ENCODE measurements at regions of chr2 and their contacts with region 1.

Region 1: GRCh38 chr2:105761931-105762515 is 17.3 kb downstream of the NCK2 start:
- DNase-seq: no peak
- H3K4me3 Mint-ChIP-seq: peak overlapping the region; percentile 49
- H3K27ac Mint-ChIP-seq: peak overlapping the region; percentile 60
- H3K4me1 Mint-ChIP-seq: peaks cover 90% of the 10 kb centered on the region
- H3K27me3 Mint-ChIP-seq: no peaks in the 10 kb centered on the region

Region 2: GRCh38 chr2:105545730-105546627 is 216.0 kb before region 1 on chr2:
- CTCF ChIA-PET with region 1: no interaction called
- POLR2A ChIA-PET with region 1: no interaction called
- DNase-seq: peak; percentile 70
- H3K4me3 Mint-ChIP-seq: no peak overlapping the region
- H3K27ac Mint-ChIP-seq: no peak overlapping the region
- H3K4me1 Mint-ChIP-seq: peaks cover 15% of the 10 kb centered on the region
- H3K27me3 Mint-ChIP-seq: peaks cover 12% of the 10 kb centered on the region

Region 3: DNA sequence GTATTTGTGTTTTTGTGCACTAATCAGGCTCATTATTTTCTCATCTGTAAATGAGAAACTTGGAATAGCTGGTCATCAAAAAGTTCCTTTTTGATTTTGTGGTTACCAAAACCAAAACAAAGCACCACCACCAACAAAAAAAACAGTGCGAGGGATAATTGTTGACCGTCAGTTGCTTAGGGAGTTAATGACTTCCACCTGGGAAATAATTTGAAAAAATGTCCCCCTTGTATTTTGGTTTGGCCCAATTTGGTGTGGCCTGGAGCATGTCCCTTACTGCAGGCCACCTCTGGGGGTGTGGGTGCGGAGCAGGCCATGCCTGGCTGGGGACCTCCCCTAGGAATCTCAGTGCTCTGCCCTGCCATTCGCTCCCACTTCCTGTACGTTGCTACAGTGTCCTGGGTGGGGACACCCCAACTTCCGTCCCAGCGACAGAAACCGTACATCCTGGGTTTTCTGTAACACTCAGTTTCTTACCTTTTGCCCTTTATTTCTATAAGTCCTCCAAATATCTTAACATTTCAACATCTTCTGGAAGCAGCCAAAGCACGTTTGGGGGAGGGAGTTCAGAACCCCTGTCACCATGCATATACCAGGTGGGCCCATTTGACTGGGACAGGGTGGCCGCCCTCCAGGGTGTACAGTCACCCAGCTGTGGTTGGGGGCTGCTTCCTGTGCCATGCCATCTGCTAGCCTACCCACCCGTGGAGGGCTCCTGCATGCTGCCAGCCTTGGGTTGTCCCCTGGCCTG is 14.0 kb after region 1 on chr2:
- CTCF ChIA-PET with region 1: no interaction called
- POLR2A ChIA-PET with region 1: interaction called, 35 read pairs
- DNase-seq: peak; percentile 50
- H3K4me3 Mint-ChIP-seq: peak overlapping the region; percentile 69
- H3K27ac Mint-ChIP-seq: peak overlapping the region; percentile 92
- H3K4me1 Mint-ChIP-seq: peaks cover 92% of the 10 kb centered on the region
- H3K27me3 Mint-ChIP-seq: no peaks in the 10 kb centered on the region

Region 4: DNA sequence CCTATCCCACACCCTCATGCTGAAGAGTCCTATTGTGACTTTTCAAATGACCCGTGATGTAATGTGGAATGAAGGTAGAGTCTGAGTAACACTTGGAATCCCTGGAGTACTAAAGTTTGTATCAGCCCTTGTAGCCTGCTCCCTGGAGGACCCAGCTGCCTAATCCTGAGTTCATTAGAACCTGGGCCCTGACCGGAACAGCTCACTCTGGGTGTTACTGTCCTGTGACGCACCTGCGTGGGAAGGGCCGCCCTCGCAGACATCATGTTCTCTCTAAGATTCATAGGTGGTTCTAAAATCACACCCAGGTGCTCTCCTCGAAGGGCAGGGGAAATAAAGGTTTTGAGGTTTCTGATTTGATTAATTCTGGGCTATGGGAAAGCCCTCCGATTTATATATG is 45.0 kb after region 1 on chr2:
- CTCF ChIA-PET with region 1: no interaction called
- POLR2A ChIA-PET with region 1: no interaction called
- DNase-seq: no peak
- H3K4me3 Mint-ChIP-seq: no peak overlapping the region
- H3K27ac Mint-ChIP-seq: no peak overlapping the region
- H3K4me1 Mint-ChIP-seq: peaks cover 82% of the 10 kb centered on the region
- H3K27me3 Mint-ChIP-seq: no peaks in the 10 kb centered on the region

Region 5: GRCh38 chr2:105969555-105969954 is 207.5 kb after region 1 on chr2:
- CTCF ChIA-PET with region 1: no interaction called
- POLR2A ChIA-PET with region 1: no interaction called
- DNase-seq: peak; percentile 26
- H3K4me3 Mint-ChIP-seq: no peak overlapping the region
- H3K27ac Mint-ChIP-seq: no peak overlapping the region
- H3K4me1 Mint-ChIP-seq: no peaks in the 10 kb centered on the region
- H3K27me3 Mint-ChIP-seq: peaks cover 2% of the 10 kb centered on the region